ENCODE measurements at regions of chr18 and their contacts with region 1.

Region 1: GRCh38 chr18:7617738-7618422 is 50.8 kb downstream of the PTPRM start:
- DNase-seq: peak in 1 of 2 donors; percentile 67
- ATAC-seq: peak in 6 of 8 donors; percentile 37 to 75 (median 55)
- H3K4me3 ChIP-seq: peak overlapping the region in 5 of 10 donors; percentile 18 to 30 (median 22)
- H3K27ac ChIP-seq: peak overlapping the region in 9 of 10 donors; percentile 0 to 72 (median 65)
- H3K4me1 ChIP-seq: peaks cover 16 to 99% (median 79%) of the 10 kb centered on the region in 9 donors
- H3K27me3 ChIP-seq: no peaks in the 10 kb centered on the region
- CTCF ChIP-seq: no peak

Region 2: GRCh38 chr18:7658712-7659111 is 40.8 kb after region 1 on chr18:
- intact Hi-C with region 1: loop called in 1 of 10 experiments (anchors 5 kb)
- DNase-seq: no peak
- ATAC-seq: no peak
- H3K4me3 ChIP-seq: no peak overlapping the region
- H3K27ac ChIP-seq: peak overlapping the region in 6 of 10 donors; percentile 53 to 87 (median 80)
- H3K4me1 ChIP-seq: peaks cover 6 to 94% (median 58%) of the 10 kb centered on the region in 9 donors
- H3K27me3 ChIP-seq: no peaks in the 10 kb centered on the region
- CTCF ChIP-seq: no peak

Region 3: DNA sequence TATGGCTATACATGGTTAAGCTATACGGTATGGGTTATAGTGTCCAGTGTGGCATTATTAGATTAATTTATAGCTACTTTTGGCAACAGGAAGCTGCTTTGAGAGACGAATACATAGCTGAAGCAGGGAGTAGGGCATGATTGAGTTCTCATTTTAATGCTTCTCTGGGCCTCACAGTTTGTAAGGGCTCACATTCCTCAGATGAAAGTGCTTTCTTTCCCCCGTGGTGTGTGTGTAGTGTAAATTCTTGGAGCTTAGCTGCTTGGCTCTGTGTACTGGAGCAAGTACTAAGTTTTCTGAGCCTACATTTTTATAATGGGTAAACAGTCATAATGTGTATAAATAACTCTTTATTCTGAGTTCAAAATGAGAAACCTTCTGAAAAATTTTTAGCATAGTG is 122.9 kb after region 1 on chr18:
- intact Hi-C with region 1: loop called in 2 of 10 experiments (anchors 5 kb)
- DNase-seq: no peak
- ATAC-seq: peak in 3 of 8 donors; percentile 12 to 48 (median 25)
- H3K4me3 ChIP-seq: no peak overlapping the region
- H3K27ac ChIP-seq: peak overlapping the region in 9 of 10 donors; percentile 3 to 64 (median 53)
- H3K4me1 ChIP-seq: peaks cover 7 to 68% (median 51%) of the 10 kb centered on the region in 9 donors
- H3K27me3 ChIP-seq: no peaks in the 10 kb centered on the region
- CTCF ChIP-seq: no peak